Dendritic cell treated with granulocyte-macrophage colony-stimulating factor and Interleukin-4, amounts not matched to agents 40 ng/mL and 50 ng/mL, for 4 days (primary cell): ENCODE measurements at regions of chr6 and their contacts with region 1.

Region 1: GRCh38 chr6:108200631-108201030 is 34.8 kb downstream of the NR2E1 start:
- H3K4me3 Mint-ChIP-seq: no peak overlapping the region
- H3K27ac Mint-ChIP-seq: no peak overlapping the region
- H3K4me1 Mint-ChIP-seq: no peaks in the 10 kb centered on the region
- H3K27me3 Mint-ChIP-seq: no peaks in the 10 kb centered on the region

Region 2: DNA sequence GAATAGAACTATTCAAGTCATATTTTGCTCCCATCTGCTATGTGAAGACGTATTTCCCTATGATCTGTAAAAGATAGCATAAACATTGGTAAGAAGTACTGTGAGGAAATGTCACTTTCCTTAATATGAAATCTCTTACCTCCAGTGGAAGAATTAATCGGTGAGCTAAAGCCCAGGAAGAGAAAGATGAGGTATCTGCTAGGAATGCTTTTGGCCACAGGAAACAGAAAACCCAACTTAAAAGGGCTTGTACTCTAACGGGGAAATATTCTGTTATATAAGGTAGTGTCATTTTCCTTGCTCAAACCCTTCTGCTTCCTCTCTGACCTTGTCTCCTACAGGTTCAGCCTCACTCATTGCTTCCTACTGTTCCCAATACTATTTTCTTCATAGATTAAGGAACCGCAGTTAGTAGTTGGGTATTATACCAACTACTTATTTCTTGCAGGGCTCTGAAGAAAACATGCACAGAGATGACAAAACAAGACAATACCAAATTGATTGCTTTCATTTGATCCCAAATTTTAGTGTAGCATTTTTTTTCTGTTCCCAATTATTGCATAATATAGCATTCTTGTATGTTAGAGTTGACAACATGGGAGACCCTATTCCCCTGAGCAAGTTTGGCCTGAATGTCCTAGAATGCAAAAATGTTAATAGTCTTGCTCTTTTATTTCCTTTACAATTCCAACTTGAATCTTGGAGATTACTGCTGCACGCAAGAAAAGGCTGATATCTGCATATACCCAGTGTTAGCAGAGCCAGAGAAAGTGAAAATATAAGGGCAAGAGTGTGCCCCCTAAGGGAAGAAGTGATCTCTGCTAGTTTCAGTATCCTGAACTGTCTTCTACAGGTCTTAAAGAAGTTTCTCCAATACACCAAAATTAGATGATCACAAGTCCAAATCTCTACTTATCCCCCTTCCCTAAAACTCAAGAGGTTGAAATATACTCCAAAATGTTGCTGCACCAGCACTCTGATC is 159.6 kb after region 1 on chr6:
- intact Hi-C with region 1: loop called (anchors 10 kb)
- H3K4me3 Mint-ChIP-seq: no peak overlapping the region
- H3K27ac Mint-ChIP-seq: no peak overlapping the region
- H3K4me1 Mint-ChIP-seq: peaks cover 22% of the 10 kb centered on the region
- H3K27me3 Mint-ChIP-seq: no peaks in the 10 kb centered on the region